ENCODE measurements at regions of chr10 and their contacts with region 1.

Region 1: DNA sequence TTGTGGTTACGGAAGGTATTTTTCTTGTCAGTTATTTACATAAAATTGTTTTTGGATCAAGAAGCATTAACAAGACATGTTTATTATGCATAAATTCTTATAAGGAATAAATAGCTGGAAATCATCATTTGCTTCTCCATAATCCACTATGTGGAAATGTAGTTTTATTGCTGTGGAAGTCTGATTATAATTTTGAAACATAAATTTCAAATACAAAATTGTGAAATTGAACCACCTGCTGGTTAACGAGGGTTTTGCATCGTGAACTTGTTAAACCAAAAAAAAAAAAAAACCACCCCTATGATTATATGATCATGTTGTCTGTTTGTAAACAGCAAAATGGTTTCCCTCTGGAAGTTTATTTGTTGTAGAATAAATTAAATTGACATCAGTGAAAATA is 25.9 kb downstream of the ABRAXAS2 start:
- DNase-seq: no peak
- ATAC-seq: no peak
- H3K4me3 ChIP-seq: no peak overlapping the region
- H3K27ac ChIP-seq: no peak overlapping the region
- H3K4me1 ChIP-seq: no peaks in the 10 kb centered on the region
- H3K27me3 ChIP-seq: no peaks in the 10 kb centered on the region
- CTCF ChIP-seq: peak; percentile 40 to 44 (median 44); a peak in 4 of 6 replicates
- EP300 ChIP-seq: no peak
- POLR2A ChIP-seq: no peak
- RAD21 ChIP-seq: peak; percentile 48; the same call in 1 of the 2 replicates

Region 2: DNA sequence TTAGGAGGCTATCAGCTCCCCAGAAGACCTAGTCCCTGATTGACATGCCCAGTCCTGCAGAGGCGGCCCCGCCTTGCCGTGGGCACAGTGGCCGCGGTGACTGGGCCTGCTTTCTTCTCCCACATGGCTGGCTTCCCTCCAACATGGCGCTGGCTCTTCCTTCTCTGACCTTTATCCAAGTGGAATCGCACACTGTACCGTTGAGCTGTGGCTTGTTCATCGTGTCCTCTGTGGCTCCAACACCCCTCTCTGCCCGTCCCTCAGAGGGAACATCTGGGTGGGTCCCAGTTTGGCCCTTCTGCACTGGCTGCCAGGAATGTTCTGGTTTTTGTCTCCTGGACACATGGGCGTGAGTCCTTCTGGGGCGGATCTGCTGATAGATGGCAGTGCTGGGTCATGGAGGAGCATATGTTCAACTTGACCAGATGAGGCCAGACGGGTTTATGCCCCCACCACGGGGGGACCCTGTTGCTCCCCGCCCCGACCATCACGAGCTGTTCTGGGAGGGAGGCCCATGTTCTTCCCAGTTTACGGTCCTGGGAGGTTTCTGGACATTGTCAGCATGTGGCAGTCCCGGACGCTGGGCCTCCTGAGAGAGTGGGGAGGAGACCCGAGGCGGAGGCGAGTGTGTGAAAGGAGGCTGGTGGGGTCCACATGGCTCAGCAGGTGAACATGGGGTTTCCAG is 302.4 kb before region 1 on chr10:
- CTCF ChIA-PET with region 1: interaction called, 32 read pairs
- POLR2A ChIA-PET with region 1: no interaction called
- RAD21 ChIA-PET with region 1: interaction called, 18 read pairs
- SMC1A ChIA-PET with region 1: interaction called, 7 read pairs
- in situ Hi-C with region 1: loop called (anchors 5 kb)
- intact Hi-C with region 1: loop called (anchors 1 kb)
- DNase-seq: no peak
- ATAC-seq: no peak
- H3K4me3 ChIP-seq: no peak overlapping the region
- H3K27ac ChIP-seq: no peak overlapping the region
- H3K4me1 ChIP-seq: peaks cover 11% of the 10 kb centered on the region
- H3K27me3 ChIP-seq: no peaks in the 10 kb centered on the region
- CTCF ChIP-seq: no peak
- EP300 ChIP-seq: no peak
- POLR2A ChIP-seq: no peak
- RAD21 ChIP-seq: no peak

Region 3: GRCh38 chr10:124530215-124530665 is 297.2 kb before region 1 on chr10:
- CTCF ChIA-PET with region 1: interaction called, 32 read pairs
- POLR2A ChIA-PET with region 1: no interaction called
- RAD21 ChIA-PET with region 1: interaction called, 18 read pairs
- SMC1A ChIA-PET with region 1: interaction called, 7 read pairs
- in situ Hi-C with region 1: loop called (anchors 5 kb)
- intact Hi-C with region 1: loop called (anchors 1 kb)
- DNase-seq: no peak
- ATAC-seq: peak; percentile 99
- H3K4me3 ChIP-seq: no peak overlapping the region
- H3K27ac ChIP-seq: no peak overlapping the region
- H3K4me1 ChIP-seq: peaks cover 4% of the 10 kb centered on the region; the same call in 1 of the 2 replicates
- H3K27me3 ChIP-seq: no peaks in the 10 kb centered on the region
- CTCF ChIP-seq: peak; percentile 92 to 98 (median 96); a peak in 5 of 6 replicates
- EP300 ChIP-seq: no peak
- POLR2A ChIP-seq: no peak
- RAD21 ChIP-seq: peak; percentile 99

Region 4: GRCh38 chr10:124539935-124540641 is 287.4 kb before region 1 on chr10:
- CTCF ChIA-PET with region 1: interaction called, 28 read pairs
- POLR2A ChIA-PET with region 1: interaction called, 4 read pairs
- RAD21 ChIA-PET with region 1: interaction called, 9 read pairs
- SMC1A ChIA-PET with region 1: interaction called, 18 read pairs
- in situ Hi-C with region 1: no loop called
- intact Hi-C with region 1: loop called (anchors 1 kb)
- DNase-seq: no peak
- ATAC-seq: peak; percentile 94
- H3K4me3 ChIP-seq: no peak overlapping the region
- H3K27ac ChIP-seq: no peak overlapping the region
- H3K4me1 ChIP-seq: peaks cover 3% of the 10 kb centered on the region; the same call in 1 of the 2 replicates
- H3K27me3 ChIP-seq: no peaks in the 10 kb centered on the region; a peak in 1 of 4 replicates
- CTCF ChIP-seq: peak; percentile 65 to 92 (median 83)
- EP300 ChIP-seq: no peak
- POLR2A ChIP-seq: no peak
- RAD21 ChIP-seq: peak; percentile 94

Region 5: GRCh38 chr10:124545351-124546054 is 282.0 kb before region 1 on chr10:
- CTCF ChIA-PET with region 1: interaction called, 28 read pairs
- POLR2A ChIA-PET with region 1: no interaction called
- RAD21 ChIA-PET with region 1: interaction called, 9 read pairs
- SMC1A ChIA-PET with region 1: interaction called, 18 read pairs
- in situ Hi-C with region 1: no loop called
- intact Hi-C with region 1: loop called (anchors 1 kb)
- DNase-seq: no peak
- ATAC-seq: no peak
- H3K4me3 ChIP-seq: no peak overlapping the region
- H3K27ac ChIP-seq: no peak overlapping the region
- H3K4me1 ChIP-seq: peaks cover 3% of the 10 kb centered on the region
- H3K27me3 ChIP-seq: no peaks in the 10 kb centered on the region; a peak in 1 of 4 replicates
- CTCF ChIP-seq: no peak
- EP300 ChIP-seq: no peak
- POLR2A ChIP-seq: no peak
- RAD21 ChIP-seq: no peak

Region 6: GRCh38 chr10:124748166-124748565 is 79.3 kb before region 1 on chr10:
- CTCF ChIA-PET with region 1: interaction called, 14 read pairs
- POLR2A ChIA-PET with region 1: no interaction called
- RAD21 ChIA-PET with region 1: interaction called, 6 read pairs
- SMC1A ChIA-PET with region 1: interaction called, 8 read pairs
- in situ Hi-C with region 1: no loop called
- intact Hi-C with region 1: loop called (anchors 5 kb)
- DNase-seq: no peak
- ATAC-seq: no peak
- H3K4me3 ChIP-seq: no peak overlapping the region
- H3K27ac ChIP-seq: no peak overlapping the region
- H3K4me1 ChIP-seq: peaks cover 4% of the 10 kb centered on the region; the same call in 1 of the 2 replicates
- H3K27me3 ChIP-seq: no peaks in the 10 kb centered on the region
- CTCF ChIP-seq: no peak
- EP300 ChIP-seq: no peak
- POLR2A ChIP-seq: no peak
- RAD21 ChIP-seq: no peak

Region 7: GRCh38 chr10:124864421-124865193 is 37.1 kb after region 1 on chr10:
- CTCF ChIA-PET with region 1: no interaction called
- POLR2A ChIA-PET with region 1: no interaction called
- RAD21 ChIA-PET with region 1: no interaction called
- SMC1A ChIA-PET with region 1: no interaction called
- in situ Hi-C with region 1: no loop called
- intact Hi-C with region 1: no loop called
- DNase-seq: no peak
- ATAC-seq: no peak
- H3K4me3 ChIP-seq: no peak overlapping the region
- H3K27ac ChIP-seq: no peak overlapping the region
- H3K4me1 ChIP-seq: no peaks in the 10 kb centered on the region
- H3K27me3 ChIP-seq: no peaks in the 10 kb centered on the region; a peak in 1 of 4 replicates
- CTCF ChIP-seq: no peak
- EP300 ChIP-seq: no peak
- POLR2A ChIP-seq: no peak
- RAD21 ChIP-seq: no peak

Measured in GM12878 (cell line).